H1 (cell line): ENCODE measurements at regions of chr7 and their contacts with region 1.

Region 1: GRCh38 chr7:116258734-116259133 is 48.4 kb downstream of the TES start:
- DNase-seq: no peak
- H3K4me3 ChIP-seq: no peak overlapping the region
- H3K27ac ChIP-seq: no peak overlapping the region
- H3K4me1 ChIP-seq: no peaks in the 10 kb centered on the region
- H3K27me3 ChIP-seq: no peaks in the 10 kb centered on the region
- CTCF ChIP-seq: peak in 2 of 3 experiments; percentile 50 to 58; a peak in 2 of 4 replicates
- EP300 ChIP-seq: no peak
- POLR2A ChIP-seq: no peak
- RAD21 ChIP-seq: peak; percentile 86 to 90

Region 2: GRCh38 chr7:116075351-116076145 is 183.2 kb before region 1 on chr7:
- CTCF ChIA-PET with region 1: no interaction called
- POLR2A ChIA-PET with region 1: no interaction called
- DNase-seq: no peak
- H3K4me3 ChIP-seq: no peak overlapping the region
- H3K27ac ChIP-seq: no peak overlapping the region
- H3K4me1 ChIP-seq: no peaks in the 10 kb centered on the region
- H3K27me3 ChIP-seq: no peaks in the 10 kb centered on the region
- CTCF ChIP-seq: no peak
- EP300 ChIP-seq: no peak
- POLR2A ChIP-seq: no peak
- RAD21 ChIP-seq: no peak

Region 3: GRCh38 chr7:116173051-116174028 is 85.4 kb before region 1 on chr7:
- CTCF ChIA-PET with region 1: interaction called, 42 read pairs
- POLR2A ChIA-PET with region 1: no interaction called
- DNase-seq: no peak
- H3K4me3 ChIP-seq: no peak overlapping the region
- H3K27ac ChIP-seq: no peak overlapping the region
- H3K4me1 ChIP-seq: no peaks in the 10 kb centered on the region; a peak in 1 of 7 replicates
- H3K27me3 ChIP-seq: no peaks in the 10 kb centered on the region
- CTCF ChIP-seq: peak in 1 of 3 experiments; percentile 18; a peak in 2 of 4 replicates
- EP300 ChIP-seq: no peak
- POLR2A ChIP-seq: no peak
- RAD21 ChIP-seq: peak; percentile 62 to 68

Region 4: DNA sequence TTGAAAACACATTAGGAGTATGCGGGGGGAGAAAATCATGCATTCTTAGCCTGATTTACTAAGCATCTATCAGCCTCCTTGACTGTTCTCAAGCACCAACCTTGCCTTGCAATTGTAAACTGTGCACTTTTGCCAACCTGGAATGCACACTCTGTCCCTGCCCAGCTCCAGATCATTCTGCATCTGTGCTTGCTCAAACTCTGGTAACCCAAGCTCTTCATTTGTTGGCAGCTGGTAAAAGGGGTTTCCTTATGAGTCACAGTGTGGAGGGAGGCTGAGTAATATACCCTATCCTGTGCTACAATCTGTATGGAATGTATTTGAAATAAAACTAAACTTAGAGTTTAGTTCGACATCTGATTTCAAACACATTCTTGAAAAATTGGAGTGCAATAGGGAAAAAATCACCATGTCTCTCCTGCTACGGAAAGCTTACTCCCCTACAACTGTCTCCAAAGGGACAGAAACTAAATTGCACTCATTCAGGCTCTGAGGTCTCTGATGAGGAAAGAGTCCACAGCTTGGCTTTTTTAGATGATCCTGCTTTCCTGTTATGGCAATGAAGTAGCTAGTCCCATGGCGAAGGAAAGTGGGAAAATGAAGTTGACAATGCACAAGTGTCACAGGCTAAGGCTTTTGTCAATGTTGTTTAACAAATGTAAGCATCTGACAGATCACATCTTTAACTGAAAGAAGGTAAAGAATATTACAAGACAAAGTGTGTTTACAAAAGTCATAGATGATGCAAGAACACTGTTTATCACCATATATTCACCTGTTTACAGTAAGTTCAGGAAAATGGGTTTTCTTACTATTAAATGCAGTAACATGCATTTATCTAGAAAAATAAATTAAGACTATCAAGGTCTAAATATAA is 13.5 kb after region 1 on chr7:
- CTCF ChIA-PET with region 1: interaction called, 22 read pairs
- POLR2A ChIA-PET with region 1: no interaction called
- DNase-seq: no peak
- H3K4me3 ChIP-seq: no peak overlapping the region
- H3K27ac ChIP-seq: no peak overlapping the region
- H3K4me1 ChIP-seq: peaks cover 0 to 9% (median 3%) of the 10 kb centered on the region in 4 experiments; a peak in 2 of 7 replicates
- H3K27me3 ChIP-seq: no peaks in the 10 kb centered on the region
- CTCF ChIP-seq: no peak
- EP300 ChIP-seq: no peak
- POLR2A ChIP-seq: no peak
- RAD21 ChIP-seq: no peak

Region 5: DNA sequence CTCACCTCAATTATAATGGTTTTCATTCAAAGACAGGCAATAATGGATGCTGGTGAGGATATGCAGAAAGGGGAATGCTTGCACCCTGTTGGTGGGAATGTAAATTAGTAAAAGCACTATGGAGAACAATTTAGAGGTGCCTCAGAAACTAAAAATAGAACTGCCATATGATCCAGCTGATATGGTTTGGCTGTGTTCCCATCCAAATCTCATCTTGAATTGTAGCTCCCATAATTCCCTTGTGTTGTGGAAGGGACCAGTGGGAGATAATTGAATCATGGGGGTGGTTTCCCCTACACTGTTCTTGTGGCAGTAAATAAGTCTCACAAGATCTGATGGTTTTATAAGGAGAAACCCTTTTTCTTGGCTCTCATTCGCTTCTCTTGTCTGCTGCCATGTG is 39.3 kb after region 1 on chr7:
- CTCF ChIA-PET with region 1: no interaction called
- POLR2A ChIA-PET with region 1: no interaction called
- DNase-seq: no peak
- H3K4me3 ChIP-seq: no peak overlapping the region
- H3K27ac ChIP-seq: no peak overlapping the region
- H3K4me1 ChIP-seq: no peaks in the 10 kb centered on the region
- H3K27me3 ChIP-seq: no peaks in the 10 kb centered on the region
- CTCF ChIP-seq: no peak
- EP300 ChIP-seq: no peak
- POLR2A ChIP-seq: no peak
- RAD21 ChIP-seq: no peak

Region 6: GRCh38 chr7:116525913-116526861 is 267.5 kb after region 1 on chr7:
- CTCF ChIA-PET with region 1: interaction called, 54 read pairs
- POLR2A ChIA-PET with region 1: no interaction called
- DNase-seq: peak in 1 of 2 experiments; percentile 85
- H3K4me3 ChIP-seq: peak overlapping the region; percentile 72 to 97 (median 73)
- H3K27ac ChIP-seq: no peak overlapping the region
- H3K4me1 ChIP-seq: peaks cover 2 to 12% (median 10%) of the 10 kb centered on the region in 4 experiments; a peak in 5 of 7 replicates
- H3K27me3 ChIP-seq: peaks cover 0 to 20% (median 12%) of the 10 kb centered on the region in 4 experiments; a peak in 6 of 7 replicates
- CTCF ChIP-seq: peak; percentile 62 to 74 (median 64)
- EP300 ChIP-seq: no peak
- POLR2A ChIP-seq: peak in 1 of 2 experiments; percentile 5; a peak in 1 of 3 replicates
- RAD21 ChIP-seq: peak; percentile 20 to 67; a peak in 3 of 4 replicates

Region 7: DNA sequence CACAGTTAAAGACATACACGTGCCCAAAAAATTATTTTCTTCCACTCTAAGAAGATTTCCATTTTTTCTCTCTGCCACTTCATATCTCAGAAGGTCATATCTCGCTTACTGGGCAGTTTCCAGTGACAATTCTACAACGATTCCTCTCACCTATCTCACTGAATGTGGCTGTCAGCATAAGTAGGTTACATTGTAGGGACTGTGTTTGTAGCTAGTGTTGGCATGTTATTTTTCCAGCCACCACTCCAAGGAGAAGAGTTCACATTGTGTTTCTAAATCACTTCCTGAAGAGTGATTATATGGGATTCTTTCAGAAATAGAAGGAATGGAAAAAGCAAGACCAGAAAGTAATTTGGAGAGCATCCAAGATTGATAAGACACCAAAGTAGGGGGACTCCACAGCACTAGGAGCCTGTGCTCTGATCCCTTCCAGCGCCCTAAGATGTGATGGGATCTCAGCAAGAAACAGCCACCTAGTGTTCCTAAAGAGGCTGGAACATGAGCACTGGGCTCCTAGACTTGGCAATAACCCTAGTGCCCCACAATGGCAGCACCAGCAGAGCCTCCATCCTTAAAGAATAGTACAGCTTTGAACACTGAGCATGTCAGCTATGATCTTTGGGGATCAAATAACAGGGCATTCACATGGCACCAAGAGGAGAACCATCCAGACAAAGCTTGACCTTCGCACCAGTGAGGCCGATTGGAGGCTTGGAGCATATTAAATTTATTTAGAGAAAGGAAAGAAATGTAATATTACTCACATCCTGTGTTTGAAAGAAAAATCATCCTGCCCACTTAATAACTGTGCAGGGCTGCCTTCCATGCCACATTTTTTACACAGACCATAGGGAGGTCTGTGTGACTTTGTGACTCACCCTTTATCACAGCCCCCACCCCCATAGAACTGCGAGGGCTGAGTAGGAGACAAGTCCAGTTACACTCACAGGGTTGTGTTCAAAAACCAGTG is 317.9 kb after region 1 on chr7:
- CTCF ChIA-PET with region 1: interaction called, 13 read pairs
- POLR2A ChIA-PET with region 1: no interaction called
- DNase-seq: no peak
- H3K4me3 ChIP-seq: no peak overlapping the region
- H3K27ac ChIP-seq: no peak overlapping the region
- H3K4me1 ChIP-seq: no peaks in the 10 kb centered on the region
- H3K27me3 ChIP-seq: no peaks in the 10 kb centered on the region
- CTCF ChIP-seq: no peak
- EP300 ChIP-seq: no peak
- POLR2A ChIP-seq: no peak
- RAD21 ChIP-seq: no peak; a peak in 1 of 4 replicates

Region 8: DNA sequence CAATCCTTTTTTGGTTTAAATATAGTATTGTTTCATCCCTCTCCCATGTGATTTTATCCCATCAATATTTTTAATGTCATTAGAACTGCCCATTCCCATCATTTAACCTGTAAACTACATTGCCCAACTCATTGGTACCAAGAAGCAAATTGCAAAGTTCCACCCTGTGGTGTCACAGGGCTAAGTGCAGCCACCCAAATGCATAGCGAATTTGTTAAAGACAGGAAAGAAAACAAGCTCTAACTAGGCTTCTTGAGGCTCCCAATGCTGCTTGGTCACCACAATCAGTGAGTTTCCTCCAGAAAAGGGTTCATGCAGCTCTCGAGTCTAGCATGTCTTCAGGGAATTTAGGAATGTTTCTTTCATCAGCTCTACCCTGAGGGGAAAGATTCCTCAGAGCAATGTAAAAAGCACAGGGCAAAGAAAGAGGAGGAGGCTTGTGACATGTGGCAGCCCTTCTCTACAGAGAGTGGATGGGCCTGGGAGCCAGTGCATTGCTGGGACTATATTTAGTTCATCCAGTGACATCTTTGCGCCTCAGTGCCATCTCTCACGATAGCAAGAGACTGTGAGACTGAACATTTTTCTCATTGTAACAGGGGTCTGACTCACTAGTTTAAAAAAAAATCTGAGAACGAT is 324.2 kb after region 1 on chr7:
- CTCF ChIA-PET with region 1: interaction called, 107 read pairs
- POLR2A ChIA-PET with region 1: interaction called, 3 read pairs
- DNase-seq: no peak
- H3K4me3 ChIP-seq: no peak overlapping the region
- H3K27ac ChIP-seq: no peak overlapping the region
- H3K4me1 ChIP-seq: no peaks in the 10 kb centered on the region
- H3K27me3 ChIP-seq: no peaks in the 10 kb centered on the region
- CTCF ChIP-seq: no peak
- EP300 ChIP-seq: no peak
- POLR2A ChIP-seq: no peak
- RAD21 ChIP-seq: no peak